ENCODE measurements at regions of chr12 and their contacts with region 1.

Region 1: DNA sequence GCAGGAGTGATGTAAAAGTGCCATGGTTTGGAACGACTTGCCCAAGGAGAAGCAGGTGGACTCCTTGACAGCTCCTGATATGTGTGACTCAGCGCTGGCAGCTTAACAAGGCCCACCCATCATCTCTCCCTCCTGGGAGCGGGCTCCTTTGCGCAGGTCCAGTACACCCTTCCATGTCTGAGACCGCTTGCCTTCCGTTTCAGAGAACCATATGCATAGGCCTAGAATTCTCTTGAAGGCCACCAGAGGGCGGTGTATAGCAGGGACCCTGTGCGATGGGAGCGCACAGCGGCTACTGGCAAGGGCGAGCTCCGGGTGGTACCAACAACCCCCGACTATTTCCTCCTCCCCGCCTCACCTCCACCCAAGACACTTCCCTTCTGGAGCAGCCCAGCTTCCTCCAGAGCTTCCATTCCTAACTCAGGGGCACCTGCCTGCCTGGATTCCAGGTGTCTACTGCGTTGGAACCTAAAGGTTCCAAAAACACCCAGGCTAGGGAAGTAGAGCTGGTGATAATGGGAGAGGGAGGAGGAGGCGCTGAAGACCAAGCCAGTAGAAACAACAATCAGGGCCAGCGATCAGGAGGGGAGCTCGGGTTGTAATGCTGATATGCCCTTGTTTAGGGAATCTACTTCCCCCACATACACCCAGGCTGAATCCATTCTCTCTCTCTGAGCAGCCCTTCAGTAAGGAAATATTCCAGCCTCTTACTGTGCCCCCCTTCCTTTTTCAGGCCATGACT is 6.2 kb downstream of the DHH start:
- DNase-seq: peak; percentile 77 to 80 (median 77)
- ATAC-seq: peak; percentile 90
- H3K4me3 ChIP-seq: no peak overlapping the region
- H3K27ac ChIP-seq: no peak overlapping the region
- H3K4me1 ChIP-seq: peaks cover 11% of the 10 kb centered on the region
- H3K27me3 ChIP-seq: no peaks in the 10 kb centered on the region

Region 2: GRCh38 chr12:49121047-49121696 is 32.8 kb after region 1 on chr12:
- intact Hi-C with region 1: loop called (anchors 5 kb)
- DNase-seq: peak in 1 of 3 donors; percentile 33
- ATAC-seq: peak; percentile 81 to 83
- H3K4me3 ChIP-seq: no peak overlapping the region
- H3K27ac ChIP-seq: no peak overlapping the region
- H3K4me1 ChIP-seq: no peaks in the 10 kb centered on the region
- H3K27me3 ChIP-seq: no peaks in the 10 kb centered on the region

Region 3: DNA sequence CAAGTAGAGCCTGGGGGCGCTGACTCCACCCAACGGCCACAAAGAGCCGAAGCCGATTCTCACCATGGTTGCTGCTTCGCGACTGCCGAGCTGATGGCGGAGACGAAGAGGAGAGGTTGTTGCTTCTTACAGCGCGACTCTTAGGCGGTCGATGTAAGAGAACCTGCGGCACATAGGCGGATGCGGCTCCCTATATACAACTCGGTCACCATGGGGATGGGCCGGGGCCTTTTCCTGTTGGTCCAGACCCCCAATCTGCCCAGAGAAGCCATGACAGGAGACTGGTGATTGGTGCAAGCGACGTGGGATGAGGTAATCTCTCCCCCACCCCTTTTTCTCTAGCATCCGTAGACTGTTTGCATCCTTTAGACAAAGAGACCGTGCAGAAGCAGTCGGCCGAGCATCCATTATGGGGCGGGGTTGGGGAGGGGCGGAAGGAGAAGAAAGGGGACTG is 100.6 kb after region 1 on chr12 and contains the start of gene TUBA1A:
- intact Hi-C with region 1: no loop called
- DNase-seq: peak; percentile 93 to 97 (median 95)
- ATAC-seq: peak; percentile 94 to 97
- H3K4me3 ChIP-seq: peak within 1 kb of the TSS; percentile 68
- H3K27ac ChIP-seq: peak within 1 kb of the TSS; percentile 73
- H3K4me1 ChIP-seq: no peaks in the 10 kb centered on the region
- H3K27me3 ChIP-seq: no peaks in the 10 kb centered on the region
- total RNA-seq, gene TUBA1A: 75.6 to 136 (median 112) TPM